Mucosa of descending colon (tissue), 3 donors: ENCODE measurements at regions of chr3 and their contacts with region 1.

Region 1: GRCh38 chr3:190197346-190197763 is 76.7 kb upstream of the P3H2 start:
- DNase-seq: no peak
- ATAC-seq: peak; percentile 41
- H3K4me3 ChIP-seq: no peak overlapping the region
- H3K4me1 ChIP-seq: no peaks in the 10 kb centered on the region
- CTCF ChIP-seq: no peak

Region 2: DNA sequence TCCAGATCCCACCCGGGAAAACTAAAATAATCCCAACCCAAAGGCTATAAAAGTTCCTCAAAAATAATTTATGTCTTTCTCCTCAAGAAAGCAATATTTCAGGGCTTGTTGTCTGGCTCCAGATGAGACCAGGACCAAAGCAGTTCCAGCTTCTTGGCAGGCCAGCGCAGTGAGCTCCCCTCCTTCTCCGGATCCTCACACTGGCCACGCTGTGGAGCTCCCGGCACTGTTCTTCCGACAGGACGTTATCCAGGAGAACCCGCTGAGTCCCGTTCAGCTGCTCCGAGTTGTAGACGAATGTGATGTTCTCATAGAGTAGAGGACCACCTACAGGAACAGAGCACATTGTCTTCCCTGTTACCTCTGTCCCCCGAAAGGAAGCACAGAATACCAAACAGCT is 223.0 kb before region 1 on chr3:
- intact Hi-C with region 1: loop called (anchors 5 kb)
- DNase-seq: no peak
- ATAC-seq: no peak
- H3K4me3 ChIP-seq: no peak overlapping the region
- H3K4me1 ChIP-seq: no peaks in the 10 kb centered on the region
- CTCF ChIP-seq: no peak